ENCODE measurements at regions of chr9 and their contacts with region 1.

Region 1: DNA sequence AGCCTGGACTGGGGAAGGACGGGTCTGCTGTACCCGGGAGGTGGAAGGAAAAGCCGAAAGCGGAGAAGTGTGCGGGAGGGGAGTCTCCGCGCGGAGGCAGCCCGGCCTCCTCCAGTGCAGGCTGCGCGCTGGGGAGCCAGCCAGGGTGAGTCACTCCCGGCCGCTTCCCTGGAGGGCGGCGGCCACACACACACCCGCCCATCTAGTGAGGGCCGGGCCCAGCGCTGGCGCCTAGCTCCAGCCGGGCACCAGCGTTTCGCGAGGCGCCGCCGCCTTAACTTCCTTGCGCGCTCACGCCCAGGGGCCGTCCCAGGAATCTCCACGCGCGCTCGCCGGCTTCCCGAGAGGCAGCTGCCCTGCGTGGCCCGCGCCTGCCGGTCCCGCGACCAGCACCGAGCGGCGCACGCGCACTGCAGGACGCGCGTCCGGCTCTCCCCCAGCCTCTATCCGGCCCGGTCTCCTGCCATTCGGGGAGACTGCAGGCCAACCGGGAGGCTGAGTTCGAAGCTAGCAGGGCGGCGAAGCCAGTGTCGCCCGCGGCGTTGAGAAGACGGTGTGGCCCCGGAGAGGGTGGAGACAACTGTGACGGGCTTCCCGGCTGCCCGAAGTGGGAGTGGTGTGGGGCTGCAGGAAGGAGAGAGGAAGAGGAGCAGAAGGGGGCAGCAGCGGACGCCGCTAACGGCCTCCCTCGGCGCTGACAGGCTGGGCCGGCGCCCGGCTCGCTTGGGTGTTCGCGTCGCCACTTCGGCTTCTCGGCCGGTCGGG is at the start of gene JAK2:
- DNase-seq: peak; percentile 89
- H3K4me3 ChIP-seq: peak within 1 kb of the TSS; percentile 84 to 95
- H3K27ac ChIP-seq: peak within 1 kb of the TSS; percentile 96 to 97
- H3K4me1 ChIP-seq: peaks cover 10% of the 10 kb centered on the region
- H3K27me3 ChIP-seq: no peaks in the 10 kb centered on the region
- CTCF ChIP-seq: peak in 2 of 4 experiments; percentile 6 to 41
- POLR2A ChIP-seq: peak; percentile 63
- total RNA-seq, gene JAK2: 8.6 to 13.9 TPM

Region 2: DNA sequence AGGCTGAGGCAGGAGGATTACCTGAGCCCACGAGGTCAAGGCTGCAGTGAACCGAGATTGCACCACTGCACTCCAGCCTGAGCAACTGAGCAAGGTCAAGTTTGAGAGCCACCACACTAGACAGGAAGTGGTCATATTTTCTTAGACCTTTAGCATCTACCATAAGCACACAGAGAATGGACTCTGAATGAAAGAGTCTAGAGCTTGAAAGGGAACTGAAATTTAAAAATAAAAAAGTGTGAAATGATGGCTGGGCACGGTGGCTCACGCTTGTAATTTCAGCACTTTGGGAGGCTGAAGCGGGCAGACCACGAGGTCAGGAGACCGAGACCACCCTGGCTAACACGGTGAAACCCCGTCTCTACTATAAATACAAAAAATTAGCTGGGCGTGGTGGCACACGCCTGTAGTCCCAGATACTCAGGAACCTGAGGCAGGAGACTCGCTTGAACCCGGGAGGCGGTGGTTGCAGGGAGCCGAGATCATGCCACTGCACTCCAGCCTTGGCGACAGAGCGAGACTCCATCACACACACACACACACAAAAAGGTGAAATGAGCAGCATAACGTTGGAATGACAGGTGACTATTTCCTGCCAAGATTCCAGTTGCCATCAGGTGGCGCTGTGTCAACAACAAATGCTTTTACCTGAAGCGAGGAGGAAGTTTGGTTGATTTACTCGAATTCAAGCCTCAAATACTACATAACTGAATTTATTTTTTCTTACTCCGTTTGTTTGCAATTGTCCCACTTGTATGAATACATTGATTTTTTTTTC is 222.5 kb before region 1 on chr9:
- intact Hi-C with region 1: loop called (anchors 2 kb)
- DNase-seq: peak; percentile 76
- H3K4me3 ChIP-seq: no peak overlapping the region
- H3K27ac ChIP-seq: no peak overlapping the region
- H3K4me1 ChIP-seq: no peaks in the 10 kb centered on the region
- H3K27me3 ChIP-seq: no peaks in the 10 kb centered on the region
- CTCF ChIP-seq: peak; percentile 54 to 88 (median 86)
- POLR2A ChIP-seq: no peak

Region 3: GRCh38 chr9:4774209-4774608 is 210.6 kb before region 1 on chr9:
- intact Hi-C with region 1: no loop called
- DNase-seq: no peak
- H3K4me3 ChIP-seq: no peak overlapping the region
- H3K27ac ChIP-seq: no peak overlapping the region
- H3K4me1 ChIP-seq: no peaks in the 10 kb centered on the region
- H3K27me3 ChIP-seq: no peaks in the 10 kb centered on the region
- CTCF ChIP-seq: no peak
- POLR2A ChIP-seq: no peak

Region 4: DNA sequence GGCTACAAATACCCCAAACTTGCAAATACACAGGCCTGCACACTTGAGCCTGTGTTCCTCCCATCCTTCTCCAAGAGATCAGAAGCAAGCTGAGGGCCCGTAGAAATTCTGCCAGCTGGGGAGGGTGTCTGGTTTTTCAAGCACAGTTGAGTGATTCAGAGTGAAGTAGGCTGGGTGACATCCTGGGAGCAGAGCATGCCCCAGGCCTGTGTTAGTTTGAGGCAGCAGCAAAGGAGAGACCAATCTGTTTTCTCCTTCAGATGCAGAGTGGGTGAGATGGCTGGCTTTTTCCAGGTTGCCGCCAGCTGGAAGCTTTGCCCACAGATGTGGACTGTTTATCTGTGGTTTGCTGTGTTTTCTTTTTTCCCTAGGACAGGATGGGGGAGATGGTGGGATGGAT is 129.0 kb before region 1 on chr9:
- intact Hi-C with region 1: loop called (anchors 10 kb)
- DNase-seq: no peak
- H3K4me3 ChIP-seq: no peak overlapping the region
- H3K27ac ChIP-seq: no peak overlapping the region
- H3K4me1 ChIP-seq: no peaks in the 10 kb centered on the region
- H3K27me3 ChIP-seq: no peaks in the 10 kb centered on the region
- CTCF ChIP-seq: no peak
- POLR2A ChIP-seq: no peak

Region 5: DNA sequence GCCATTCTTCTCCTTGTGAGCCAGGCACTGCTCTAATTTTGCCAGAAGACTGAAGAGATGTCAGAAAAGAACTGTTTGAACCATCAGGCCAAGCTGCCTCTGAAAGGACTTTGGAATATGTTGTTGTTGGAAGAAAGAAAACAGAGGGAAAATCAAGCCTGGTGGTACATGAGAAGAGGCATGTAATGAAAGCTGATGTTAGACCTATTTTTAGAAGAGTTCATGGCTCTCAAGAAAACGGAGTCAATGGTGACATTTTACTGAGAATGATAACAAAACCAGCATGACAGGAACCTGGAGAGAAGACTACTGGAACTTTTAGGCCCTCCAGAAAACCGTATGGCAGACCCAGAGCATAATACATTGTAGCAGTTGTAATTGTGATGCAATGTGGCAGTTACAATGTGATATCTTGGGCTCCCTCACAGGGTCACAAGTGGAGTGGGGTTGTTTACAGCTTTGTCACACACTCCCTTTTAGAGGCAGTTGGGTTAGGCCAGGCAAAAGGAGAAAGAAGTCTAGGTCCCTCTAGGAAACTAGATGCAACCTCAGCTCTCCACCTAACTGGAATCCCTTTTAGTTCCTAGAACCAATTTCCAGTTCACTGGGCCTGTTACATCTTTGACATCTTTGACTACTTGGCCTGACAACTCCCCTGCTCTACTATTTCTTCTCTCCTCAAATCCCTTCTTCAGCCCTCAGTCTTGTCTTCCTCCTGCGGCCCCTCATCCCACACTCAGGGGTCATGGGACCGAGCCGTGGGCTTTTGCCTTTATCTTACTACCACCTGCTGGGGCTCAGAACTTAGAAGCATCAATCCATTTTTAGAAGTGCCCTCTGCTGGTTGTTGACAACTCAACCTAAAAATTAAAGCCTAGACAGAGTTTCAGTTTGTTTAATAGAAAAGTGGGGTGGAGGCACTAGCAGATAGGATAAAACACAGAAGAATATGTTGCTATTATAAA is 60.9 kb before region 1 on chr9:
- intact Hi-C with region 1: no loop called
- DNase-seq: no peak
- H3K4me3 ChIP-seq: no peak overlapping the region
- H3K27ac ChIP-seq: no peak overlapping the region
- H3K4me1 ChIP-seq: no peaks in the 10 kb centered on the region
- H3K27me3 ChIP-seq: no peaks in the 10 kb centered on the region
- CTCF ChIP-seq: peak in 2 of 4 experiments; percentile 28 to 33
- POLR2A ChIP-seq: no peak

Region 6: GRCh38 chr9:5178126-5178805 is 193.5 kb after region 1 on chr9:
- intact Hi-C with region 1: no loop called
- DNase-seq: no peak
- H3K4me3 ChIP-seq: no peak overlapping the region
- H3K27ac ChIP-seq: no peak overlapping the region
- H3K4me1 ChIP-seq: no peaks in the 10 kb centered on the region
- H3K27me3 ChIP-seq: no peaks in the 10 kb centered on the region
- CTCF ChIP-seq: no peak
- POLR2A ChIP-seq: no peak

Region 7: GRCh38 chr9:5437254-5438216 is 452.7 kb after region 1 on chr9 and contains the start of gene PLGRKT:
- intact Hi-C with region 1: loop called (anchors 10 kb)
- DNase-seq: peak; percentile 93
- H3K4me3 ChIP-seq: peak within 1 kb of the TSS; percentile 61 to 71
- H3K27ac ChIP-seq: peak within 1 kb of the TSS; percentile 87 to 88
- H3K4me1 ChIP-seq: peaks cover 2% of the 10 kb centered on the region
- H3K27me3 ChIP-seq: no peaks in the 10 kb centered on the region
- CTCF ChIP-seq: peak in 1 of 4 experiments; percentile 34
- POLR2A ChIP-seq: peak; percentile 84
- total RNA-seq, gene PLGRKT: 10.4 to 49.6 TPM

Measured in prostate gland (tissue), 2 donors.